Prostate gland (tissue), 2 donors: ENCODE measurements at regions of chr19 and their contacts with region 1.

Region 1: GRCh38 chr19:44051654-44052402 is at the start of gene ZNF223:
- DNase-seq: peak; percentile 97
- H3K4me3 ChIP-seq: peak within 1 kb of the TSS; percentile 67 to 82
- H3K27ac ChIP-seq: peak within 1 kb of the TSS; percentile 75 to 77
- H3K4me1 ChIP-seq: no peaks in the 10 kb centered on the region
- H3K27me3 ChIP-seq: no peaks in the 10 kb centered on the region
- CTCF ChIP-seq: peak in 1 of 4 experiments; percentile 8
- POLR2A ChIP-seq: no peak
- total RNA-seq, gene ZNF223: 9.1 to 10.6 TPM

Region 2: GRCh38 chr19:43934985-43935708 is 116.7 kb before region 1 on chr19 and contains the start of gene ZNF45:
- intact Hi-C with region 1: no loop called
- DNase-seq: peak; percentile 93
- H3K4me3 ChIP-seq: peak within 1 kb of the TSS; percentile 57 to 63
- H3K27ac ChIP-seq: peak within 1 kb of the TSS; percentile 83
- H3K4me1 ChIP-seq: no peaks in the 10 kb centered on the region
- H3K27me3 ChIP-seq: no peaks in the 10 kb centered on the region
- CTCF ChIP-seq: peak in 1 of 4 experiments; percentile 29
- POLR2A ChIP-seq: no peak
- total RNA-seq, gene ZNF45: 14.5 to 17.0 TPM

Region 3: DNA sequence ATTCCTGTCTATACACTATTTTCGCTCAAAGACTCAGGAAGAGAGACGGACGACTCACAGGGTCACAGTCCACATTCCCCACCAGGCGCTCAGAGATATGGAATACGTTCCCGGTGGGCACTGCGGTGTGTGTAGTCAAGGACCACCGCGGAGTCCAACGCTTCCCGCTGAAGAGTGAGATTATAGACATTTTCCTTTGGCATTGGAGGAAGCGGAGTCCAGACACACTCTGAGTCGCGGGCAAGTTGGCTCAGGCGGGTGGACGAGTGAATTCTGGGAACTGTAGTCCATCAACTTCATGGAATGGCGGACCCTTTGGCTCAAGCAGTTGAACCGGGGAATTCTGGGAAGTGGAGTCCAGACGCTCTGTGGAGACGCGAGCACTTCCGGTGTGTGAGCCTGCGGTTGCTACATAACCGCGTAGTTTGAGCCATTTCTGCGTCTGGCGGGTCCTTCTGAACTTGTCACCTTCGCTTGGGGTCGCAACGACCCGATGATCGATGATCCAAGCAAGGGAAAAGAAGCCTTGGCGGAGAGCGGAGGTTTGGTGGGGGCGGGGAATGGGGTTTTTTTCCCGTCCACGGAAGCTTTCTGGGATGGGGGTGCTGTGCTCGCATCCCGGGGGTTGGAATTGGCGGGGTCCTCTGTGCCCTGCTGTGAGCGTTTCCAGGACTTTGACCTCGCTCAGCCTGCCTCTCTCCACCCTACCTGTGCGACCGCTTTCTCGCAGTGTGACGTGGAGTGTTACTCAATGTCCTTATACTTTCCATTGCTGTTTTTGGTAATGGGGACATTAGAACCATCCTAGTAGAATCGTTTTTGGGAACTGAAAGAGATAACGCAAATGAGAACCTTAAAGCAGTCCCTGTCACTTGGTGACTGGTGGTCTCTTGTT is 49.0 kb before region 1 on chr19 and contains the start of gene ZNF230:
- intact Hi-C with region 1: no loop called
- DNase-seq: peak; percentile 95
- H3K4me3 ChIP-seq: peak within 1 kb of the TSS; percentile 61 to 64
- H3K27ac ChIP-seq: peak within 1 kb of the TSS; percentile 66 to 67
- H3K4me1 ChIP-seq: no peaks in the 10 kb centered on the region
- H3K27me3 ChIP-seq: no peaks in the 10 kb centered on the region
- CTCF ChIP-seq: no peak
- POLR2A ChIP-seq: peak; percentile 20
- total RNA-seq, gene ZNF230: 2.6 to 3.5 TPM

Region 4: DNA sequence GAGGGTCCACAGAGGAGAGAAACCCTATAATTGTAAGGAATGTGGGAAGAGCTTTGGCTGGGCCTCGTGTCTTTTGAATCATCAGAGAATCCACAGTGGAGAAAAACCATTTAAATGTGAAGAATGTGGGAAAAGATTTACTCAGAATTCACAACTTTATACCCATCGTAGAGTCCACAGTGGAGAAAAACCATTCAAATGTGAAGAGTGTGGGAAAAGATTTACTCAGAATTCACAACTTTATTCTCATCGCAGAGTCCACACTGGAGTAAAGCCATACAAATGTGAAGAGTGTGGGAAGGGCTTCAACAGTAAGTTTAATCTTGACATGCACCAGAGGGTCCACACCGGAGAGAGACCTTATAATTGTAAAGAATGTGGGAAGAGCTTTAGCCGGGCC is 80.1 kb after region 1 on chr19:
- intact Hi-C with region 1: no loop called
- DNase-seq: no peak
- H3K4me3 ChIP-seq: no peak overlapping the region
- H3K27ac ChIP-seq: no peak overlapping the region
- H3K4me1 ChIP-seq: no peaks in the 10 kb centered on the region
- H3K27me3 ChIP-seq: no peaks in the 10 kb centered on the region
- CTCF ChIP-seq: no peak
- POLR2A ChIP-seq: no peak

Region 5: GRCh38 chr19:44207126-44207803 is 155.4 kb after region 1 on chr19:
- intact Hi-C with region 1: loop called (anchors 5 kb)
- DNase-seq: peak; percentile 78
- H3K4me3 ChIP-seq: peak overlapping the region; percentile 44 to 67
- H3K27ac ChIP-seq: peak overlapping the region; percentile 80 to 85
- H3K4me1 ChIP-seq: no peaks in the 10 kb centered on the region
- H3K27me3 ChIP-seq: no peaks in the 10 kb centered on the region
- CTCF ChIP-seq: no peak
- POLR2A ChIP-seq: no peak